ENCODE measurements at regions of chr10 and their contacts with region 1.

Region 1: GRCh38 chr10:47047671-47048525 is 136.7 kb downstream of the PTPN20 start:
- DNase-seq: peak; percentile 46 to 85
- ATAC-seq: peak in 1 of 3 donors; percentile 51
- H3K4me3 ChIP-seq: no peak overlapping the region
- H3K4me3 Mint-ChIP-seq: no peak overlapping the region
- H3K27ac ChIP-seq: no peak overlapping the region
- H3K27ac Mint-ChIP-seq: no peak overlapping the region
- H3K4me1 ChIP-seq: peaks cover 7% of the 10 kb centered on the region
- H3K4me1 Mint-ChIP-seq: peaks cover 10 to 14% of the 10 kb centered on the region in 2 donors
- H3K27me3 ChIP-seq: no peaks in the 10 kb centered on the region
- H3K27me3 Mint-ChIP-seq: no peaks in the 10 kb centered on the region
- CTCF ChIP-seq: peak; percentile 53

Region 2: DNA sequence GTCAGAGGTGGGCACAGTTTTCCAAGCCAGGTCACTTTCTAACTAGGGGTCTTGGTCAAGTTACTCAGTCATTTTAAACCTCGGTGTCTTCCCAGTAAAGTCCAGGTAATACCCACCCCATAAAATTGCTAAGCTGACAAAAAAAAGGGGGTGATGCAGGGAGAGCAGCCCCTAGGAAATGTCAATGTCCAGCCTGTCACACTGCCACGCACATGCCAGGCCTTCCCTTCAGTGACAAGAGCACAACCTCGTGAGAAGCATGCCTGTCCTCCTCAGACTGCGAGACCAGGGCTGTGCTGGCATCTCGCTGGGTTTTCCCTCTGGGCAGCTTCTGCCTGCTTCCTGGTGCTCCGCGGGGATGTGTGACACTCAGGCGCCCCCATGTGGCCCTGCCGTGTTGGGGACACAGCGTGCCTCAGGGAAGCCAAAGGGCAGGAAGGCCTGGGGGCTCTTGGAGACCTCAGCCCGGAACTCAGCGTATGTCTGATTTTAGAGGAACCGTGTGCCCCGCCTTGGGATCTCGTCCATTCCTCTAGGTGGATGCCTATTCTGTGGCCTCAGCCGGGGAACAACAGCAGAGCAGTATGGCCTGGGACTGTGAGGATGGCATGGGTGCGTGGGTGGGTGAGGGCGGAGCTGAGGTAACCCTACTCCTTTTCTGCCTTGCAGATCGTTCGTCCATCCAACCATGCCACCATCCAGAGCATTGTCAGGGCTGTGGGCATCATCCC is 264.2 kb after region 1 on chr10:
- intact Hi-C with region 1: loop called (anchors 1 kb)
- DNase-seq: peak; percentile 36 to 90
- ATAC-seq: peak; percentile 45 to 86 (median 46)
- H3K4me3 ChIP-seq: no peak overlapping the region
- H3K4me3 Mint-ChIP-seq: no peak overlapping the region
- H3K27ac ChIP-seq: no peak overlapping the region
- H3K27ac Mint-ChIP-seq: no peak overlapping the region
- H3K4me1 ChIP-seq: peaks cover 2% of the 10 kb centered on the region
- H3K4me1 Mint-ChIP-seq: no peaks in the 10 kb centered on the region
- H3K27me3 ChIP-seq: no peaks in the 10 kb centered on the region
- H3K27me3 Mint-ChIP-seq: no peaks in the 10 kb centered on the region
- CTCF ChIP-seq: peak; percentile 51